ENCODE measurements at regions of chr1 and their contacts with region 1.

Region 1: GRCh38 chr1:82731216-82731615 is 930.5 kb downstream of the ADGRL2 start:
- DNase-seq: no peak
- H3K4me3 ChIP-seq: no peak overlapping the region
- H3K27ac ChIP-seq: no peak overlapping the region
- H3K4me1 ChIP-seq: no peaks in the 10 kb centered on the region
- H3K27me3 ChIP-seq: no peaks in the 10 kb centered on the region
- CTCF ChIP-seq: no peak
- POLR2A ChIP-seq: no peak

Region 2: DNA sequence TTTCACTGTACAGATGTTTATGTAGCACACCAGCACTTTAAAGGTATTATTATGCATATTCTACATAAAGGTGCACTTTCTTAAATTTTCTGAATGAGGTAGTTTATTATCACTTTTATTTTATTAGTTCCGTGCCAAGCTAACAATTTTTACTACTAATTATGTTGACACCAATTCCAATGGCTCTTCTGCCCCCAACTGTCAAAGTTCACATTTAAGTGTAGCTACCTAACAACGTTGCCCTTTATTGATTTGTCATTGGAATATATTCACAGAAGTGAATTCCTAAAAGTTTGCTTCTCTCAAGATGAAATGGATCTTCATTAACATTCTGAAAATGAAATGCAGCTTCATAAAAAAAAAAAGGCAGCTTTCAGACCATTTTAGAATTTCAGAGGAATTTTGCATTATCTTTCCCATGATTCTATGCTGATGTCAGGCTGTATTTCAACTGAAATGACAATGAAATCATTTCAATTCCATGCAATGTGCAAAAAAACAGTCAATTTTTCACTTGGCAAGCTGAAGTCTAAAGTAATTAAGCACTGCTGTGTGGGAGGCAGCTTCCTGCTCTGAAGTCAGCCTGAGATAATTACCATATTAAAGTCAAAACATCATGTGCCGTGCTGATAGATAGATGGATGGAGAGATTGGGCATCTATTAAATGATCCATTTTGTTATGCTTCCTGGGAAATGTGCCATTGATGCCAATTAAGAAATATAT is 1038.5 kb after region 1 on chr1:
- intact Hi-C with region 1: loop called (anchors 5 kb)
- DNase-seq: no peak
- H3K4me3 ChIP-seq: peak overlapping the region in 2 of 3 donors; percentile 6 to 36
- H3K27ac ChIP-seq: no peak overlapping the region
- H3K4me1 ChIP-seq: no peaks in the 10 kb centered on the region
- H3K27me3 ChIP-seq: no peaks in the 10 kb centered on the region
- CTCF ChIP-seq: no peak
- POLR2A ChIP-seq: no peak

Measured in breast epithelium (tissue), 4 donors.